AG04449 (cell line): ENCODE measurements at regions of chr3 and their contacts with region 1.

Region 1: GRCh38 chr3:57434041-57434440 is 110.1 kb downstream of the DNAH12 start:
- DNase-seq: no peak
- H3K4me3 ChIP-seq: no peak overlapping the region
- CTCF ChIP-seq: peak; percentile 18

Region 2: DNA sequence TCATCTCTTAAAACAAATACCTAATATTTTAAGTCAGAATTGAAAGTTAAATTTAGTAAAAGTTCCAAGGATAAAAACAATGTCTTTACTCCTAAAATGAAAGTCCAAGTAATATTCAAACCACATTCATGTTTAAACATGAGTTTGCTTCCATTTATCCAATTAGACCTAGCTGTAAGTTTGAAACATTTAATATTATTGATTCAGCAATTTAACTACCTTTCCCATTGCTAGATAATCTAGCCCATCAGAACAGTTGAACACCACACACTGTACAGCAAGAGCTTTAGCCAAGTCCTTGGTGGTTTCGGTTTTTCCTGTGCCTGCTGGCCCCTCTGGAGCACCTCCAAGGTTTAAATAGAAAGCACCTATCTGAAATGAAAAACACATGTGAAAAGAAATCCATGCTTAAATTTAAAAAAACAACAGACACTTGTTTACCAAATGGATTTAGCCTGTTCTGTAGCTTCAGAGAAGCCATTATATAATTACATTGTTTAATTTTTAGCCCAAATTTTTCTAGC is 12.3 kb after region 1 on chr3:
- CTCF ChIA-PET with region 1: interaction called, 10 read pairs
- POLR2A ChIA-PET with region 1: no interaction called
- DNase-seq: no peak
- H3K4me3 ChIP-seq: no peak overlapping the region
- CTCF ChIP-seq: no peak

Region 3: DNA sequence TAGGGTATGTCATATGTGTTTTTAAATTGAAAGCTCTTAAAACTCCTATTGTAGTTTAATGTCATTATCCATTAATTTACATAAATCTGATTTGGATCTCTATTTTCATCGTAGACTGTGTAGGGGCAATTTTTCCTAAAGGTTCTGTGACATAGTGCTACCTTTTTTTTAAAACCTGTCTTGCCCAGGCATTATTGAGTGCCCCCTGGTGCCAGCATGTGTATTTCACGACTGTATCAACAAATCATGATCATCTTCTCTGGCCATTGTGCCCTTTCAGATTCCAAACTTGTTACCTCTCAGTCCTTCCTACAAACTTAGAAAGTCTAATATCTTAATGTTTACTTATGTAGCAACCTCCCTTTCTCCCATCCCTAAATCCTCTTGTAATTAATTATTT is 476.9 kb after region 1 on chr3:
- CTCF ChIA-PET with region 1: no interaction called
- POLR2A ChIA-PET with region 1: no interaction called
- DNase-seq: no peak
- H3K4me3 ChIP-seq: no peak overlapping the region
- CTCF ChIP-seq: peak; percentile 20